GM12878 (cell line): ENCODE measurements at regions of chr11 and their contacts with region 1.

Region 1: DNA sequence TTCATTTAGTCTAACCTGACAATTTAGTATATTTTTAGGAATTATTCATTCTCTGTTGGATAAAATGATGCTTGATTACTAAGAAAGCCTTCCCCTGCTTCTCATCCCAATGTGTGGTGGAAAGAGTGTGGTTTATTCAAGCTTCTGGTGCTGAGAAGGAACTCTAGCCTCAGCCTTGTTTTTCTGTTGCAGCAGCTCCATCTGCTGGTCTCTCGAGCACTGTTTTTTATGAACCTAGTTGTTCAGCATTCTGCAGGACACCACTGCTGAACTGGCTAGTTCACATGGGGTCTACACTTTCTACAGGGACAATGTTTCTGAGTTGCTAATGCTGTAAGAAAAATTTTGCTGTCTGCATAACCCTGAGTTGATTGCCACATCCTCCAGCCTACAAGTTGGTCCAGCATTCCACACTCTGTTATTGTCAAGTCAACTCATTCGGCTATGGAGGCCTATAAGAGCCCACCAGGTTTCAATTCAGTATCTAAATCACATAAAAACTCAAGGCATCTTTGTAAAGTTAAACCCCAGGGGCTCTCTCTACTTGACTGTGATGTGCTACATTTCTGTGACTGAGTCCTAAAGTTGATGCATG is 14.3 kb downstream of the OR2AG2 start:
- DNase-seq: no peak
- ATAC-seq: peak; percentile 95
- H3K4me3 ChIP-seq: no peak overlapping the region
- H3K27ac ChIP-seq: no peak overlapping the region
- H3K4me1 ChIP-seq: no peaks in the 10 kb centered on the region
- H3K27me3 ChIP-seq: no peaks in the 10 kb centered on the region
- CTCF ChIP-seq: peak; percentile 79 to 89 (median 82)
- EP300 ChIP-seq: no peak
- POLR2A ChIP-seq: no peak
- RAD21 ChIP-seq: peak; percentile 95

Region 2: DNA sequence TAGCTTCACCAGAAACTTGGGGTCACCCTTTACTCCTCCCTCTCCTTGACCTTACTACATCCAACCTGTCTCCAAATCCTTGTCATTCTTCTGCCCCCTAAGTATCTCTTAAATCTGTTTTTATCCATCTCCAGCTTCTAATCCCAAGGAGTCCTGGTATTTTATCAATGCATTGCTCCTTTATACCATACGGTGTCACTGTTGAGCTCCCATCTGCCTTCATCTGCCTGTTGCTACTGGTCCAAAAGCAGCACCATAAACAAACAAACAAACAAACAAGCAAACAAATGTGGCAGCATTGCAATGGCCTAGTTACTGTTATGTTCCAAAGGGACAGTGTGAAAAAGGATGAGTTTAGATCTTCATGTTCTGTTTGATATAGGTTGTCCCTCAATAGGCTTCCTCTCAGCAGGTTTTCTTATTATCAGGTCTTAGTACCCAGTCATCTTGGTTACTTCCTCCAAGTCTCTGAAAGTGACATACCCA is 226.2 kb before region 1 on chr11:
- CTCF ChIA-PET with region 1: interaction called, 26 read pairs
- POLR2A ChIA-PET with region 1: no interaction called
- RAD21 ChIA-PET with region 1: interaction called, 8 read pairs
- SMC1A ChIA-PET with region 1: interaction called, 8 read pairs
- in situ Hi-C with region 1: no loop called
- intact Hi-C with region 1: loop called (anchors 1 kb)
- DNase-seq: peak; percentile 27
- ATAC-seq: peak; percentile 80
- H3K4me3 ChIP-seq: no peak overlapping the region
- H3K27ac ChIP-seq: no peak overlapping the region
- H3K4me1 ChIP-seq: peaks cover 8% of the 10 kb centered on the region; the same call in 1 of the 2 replicates
- H3K27me3 ChIP-seq: no peaks in the 10 kb centered on the region
- CTCF ChIP-seq: peak; percentile 66 to 73 (median 70)
- EP300 ChIP-seq: no peak
- POLR2A ChIP-seq: no peak
- RAD21 ChIP-seq: peak; percentile 89

Region 3: GRCh38 chr11:6719576-6719975 is 37.9 kb before region 1 on chr11:
- CTCF ChIA-PET with region 1: interaction called, 18 read pairs
- POLR2A ChIA-PET with region 1: no interaction called
- RAD21 ChIA-PET with region 1: interaction called, 3 read pairs
- SMC1A ChIA-PET with region 1: interaction called, 17 read pairs
- in situ Hi-C with region 1: no loop called
- intact Hi-C with region 1: no loop called
- DNase-seq: no peak
- ATAC-seq: no peak
- H3K4me3 ChIP-seq: no peak overlapping the region
- H3K27ac ChIP-seq: no peak overlapping the region
- H3K4me1 ChIP-seq: no peaks in the 10 kb centered on the region
- H3K27me3 ChIP-seq: no peaks in the 10 kb centered on the region
- CTCF ChIP-seq: no peak
- EP300 ChIP-seq: no peak
- POLR2A ChIP-seq: no peak
- RAD21 ChIP-seq: no peak

Region 4: DNA sequence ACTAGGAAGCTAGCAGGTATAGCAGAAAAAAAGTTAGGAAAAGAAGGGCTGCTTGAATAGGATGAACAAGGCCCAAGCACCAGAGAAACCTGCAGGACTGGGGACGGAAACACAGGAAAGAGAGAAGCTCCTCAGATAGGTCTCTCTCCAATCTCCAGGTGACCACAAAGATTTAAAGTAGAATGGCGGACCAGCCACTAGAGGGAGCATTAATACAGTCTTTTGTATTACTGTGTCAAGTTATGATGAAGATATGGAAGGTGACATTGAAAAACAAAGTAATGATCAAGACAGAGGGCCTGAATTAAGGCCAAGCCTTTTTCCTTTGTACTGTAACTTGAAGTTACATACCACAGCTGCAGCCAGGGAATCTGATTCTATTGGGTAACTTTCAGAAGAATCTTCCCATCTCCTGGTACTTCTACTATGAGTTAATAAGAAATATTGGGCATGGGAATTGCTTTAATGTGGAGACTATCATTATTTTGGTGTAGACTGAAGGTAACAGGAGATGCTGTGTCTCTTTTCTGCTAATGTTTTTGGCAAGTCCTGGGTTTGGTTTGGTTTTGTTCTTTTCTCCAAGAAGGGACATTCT is 19.5 kb before region 1 on chr11:
- CTCF ChIA-PET with region 1: interaction called, 728 read pairs
- POLR2A ChIA-PET with region 1: interaction called, 8 read pairs
- RAD21 ChIA-PET with region 1: interaction called, 141 read pairs
- SMC1A ChIA-PET with region 1: interaction called, 420 read pairs
- in situ Hi-C with region 1: no loop called
- intact Hi-C with region 1: loop called (anchors 1 kb)
- DNase-seq: no peak
- ATAC-seq: peak; percentile 87
- H3K4me3 ChIP-seq: no peak overlapping the region
- H3K27ac ChIP-seq: no peak overlapping the region
- H3K4me1 ChIP-seq: peaks cover 27% of the 10 kb centered on the region
- H3K27me3 ChIP-seq: no peaks in the 10 kb centered on the region
- CTCF ChIP-seq: peak; percentile 67 to 80 (median 73)
- EP300 ChIP-seq: no peak
- POLR2A ChIP-seq: no peak
- RAD21 ChIP-seq: peak; percentile 68

Region 5: GRCh38 chr11:6771926-6772893 is 14.7 kb after region 1 on chr11 and contains the start of gene OR2AG2:
- CTCF ChIA-PET with region 1: interaction called, 47 read pairs
- POLR2A ChIA-PET with region 1: no interaction called
- RAD21 ChIA-PET with region 1: no interaction called
- SMC1A ChIA-PET with region 1: interaction called, 5 read pairs
- in situ Hi-C with region 1: no loop called
- intact Hi-C with region 1: no loop called
- DNase-seq: peak; percentile 37
- ATAC-seq: peak; percentile 98
- H3K4me3 ChIP-seq: no peak within 1 kb of the TSS
- H3K27ac ChIP-seq: no peak within 1 kb of the TSS
- H3K4me1 ChIP-seq: no peaks in the 10 kb centered on the region; the same call in 1 of the 2 replicates
- H3K27me3 ChIP-seq: 0 out of 4 replicates have a peak, but pooled peaks cover 0 to 2% of the 10 kb centered on the region in 2 experiments
- CTCF ChIP-seq: no peak
- EP300 ChIP-seq: no peak
- POLR2A ChIP-seq: no peak
- RAD21 ChIP-seq: no peak
- polyA plus RNA-seq, gene OR2AG2: not detected